ENCODE measurements at regions of chr19 and their contacts with region 1.

Region 1: GRCh38 chr19:58154679-58155648 is 4.4 kb upstream of the ZNF329 start:
- DNase-seq: peak; percentile 93
- H3K4me3 ChIP-seq: peak overlapping the region; percentile 39 to 75 (median 63)
- H3K27ac ChIP-seq: no peak overlapping the region
- H3K4me1 ChIP-seq: no peaks in the 10 kb centered on the region
- H3K27me3 ChIP-seq: no peaks in the 10 kb centered on the region
- CTCF ChIP-seq: peak; percentile 96 to 99
- POLR2A ChIP-seq: peak; percentile 74

Region 2: GRCh38 chr19:56393119-56394012 is 1761.6 kb before region 1 on chr19 and contains the start of gene ZNF582:
- CTCF ChIA-PET with region 1: no interaction called
- POLR2A ChIA-PET with region 1: no interaction called
- dilution Hi-C with region 1: no loop called
- intact Hi-C with region 1: loop called (anchors 1 kb)
- DNase-seq: peak; percentile 94
- H3K4me3 ChIP-seq: peak within 1 kb of the TSS in 2 of 3 experiments; percentile 17 to 64
- H3K27ac ChIP-seq: peak within 1 kb of the TSS; percentile 26
- H3K4me1 ChIP-seq: no peaks in the 10 kb centered on the region
- H3K27me3 ChIP-seq: no peaks in the 10 kb centered on the region
- CTCF ChIP-seq: peak; percentile 75 to 87
- POLR2A ChIP-seq: peak; percentile 70
- total RNA-seq, gene ZNF582: 2.2 and 2.9 TPM in 2 replicates

Region 3: DNA sequence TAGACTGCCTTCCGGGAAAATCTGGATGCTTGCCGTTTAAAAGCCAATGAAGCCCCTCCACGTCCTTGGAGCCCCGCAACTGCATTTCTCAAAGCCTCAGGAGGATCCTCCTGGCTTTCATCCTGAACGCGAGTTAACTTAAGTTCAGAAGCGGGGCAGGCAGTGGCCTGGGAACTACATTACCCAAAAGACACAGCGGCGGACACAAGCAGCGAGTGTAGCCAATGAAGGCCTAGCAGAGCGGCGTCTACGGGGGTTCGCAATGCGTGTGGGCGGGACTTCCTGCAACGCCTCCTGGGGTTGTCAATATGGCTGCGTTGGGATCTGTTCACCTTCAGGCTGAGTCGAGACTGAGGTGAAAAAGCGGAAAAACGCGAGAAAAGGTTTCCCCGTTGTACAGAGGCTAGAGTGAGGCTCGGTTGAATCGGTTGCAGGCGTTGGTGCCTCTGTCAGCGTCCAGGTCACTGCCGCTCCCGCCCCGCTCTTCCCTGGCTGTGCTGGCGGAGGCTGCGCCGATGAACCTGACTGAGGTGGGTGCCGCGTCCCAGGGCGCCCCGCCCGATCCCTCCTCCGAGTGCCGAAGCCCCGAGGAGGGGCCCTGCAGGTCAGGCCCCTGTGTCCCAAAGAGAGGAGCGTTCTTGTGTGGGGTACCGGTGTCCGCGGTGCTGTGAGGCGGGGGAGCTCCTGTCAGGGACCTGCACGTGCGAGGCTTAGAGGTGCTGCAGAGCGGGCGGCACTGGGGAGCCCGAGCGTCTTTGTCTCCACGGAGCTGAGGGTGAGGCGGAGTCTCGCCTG is 743.9 kb before region 1 on chr19 and contains the start of gene ZNF17:
- CTCF ChIA-PET with region 1: no interaction called
- POLR2A ChIA-PET with region 1: no interaction called
- dilution Hi-C with region 1: no loop called
- intact Hi-C with region 1: loop called (anchors 1 kb)
- DNase-seq: peak; percentile 95
- H3K4me3 ChIP-seq: peak within 1 kb of the TSS; percentile 91 to 99 (median 97)
- H3K27ac ChIP-seq: no peak within 1 kb of the TSS
- H3K4me1 ChIP-seq: peaks cover 8% of the 10 kb centered on the region
- H3K27me3 ChIP-seq: no peaks in the 10 kb centered on the region
- CTCF ChIP-seq: no peak
- POLR2A ChIP-seq: no peak
- total RNA-seq, gene ZNF17: 4.7 and 6.4 TPM in 2 replicates

Region 4: DNA sequence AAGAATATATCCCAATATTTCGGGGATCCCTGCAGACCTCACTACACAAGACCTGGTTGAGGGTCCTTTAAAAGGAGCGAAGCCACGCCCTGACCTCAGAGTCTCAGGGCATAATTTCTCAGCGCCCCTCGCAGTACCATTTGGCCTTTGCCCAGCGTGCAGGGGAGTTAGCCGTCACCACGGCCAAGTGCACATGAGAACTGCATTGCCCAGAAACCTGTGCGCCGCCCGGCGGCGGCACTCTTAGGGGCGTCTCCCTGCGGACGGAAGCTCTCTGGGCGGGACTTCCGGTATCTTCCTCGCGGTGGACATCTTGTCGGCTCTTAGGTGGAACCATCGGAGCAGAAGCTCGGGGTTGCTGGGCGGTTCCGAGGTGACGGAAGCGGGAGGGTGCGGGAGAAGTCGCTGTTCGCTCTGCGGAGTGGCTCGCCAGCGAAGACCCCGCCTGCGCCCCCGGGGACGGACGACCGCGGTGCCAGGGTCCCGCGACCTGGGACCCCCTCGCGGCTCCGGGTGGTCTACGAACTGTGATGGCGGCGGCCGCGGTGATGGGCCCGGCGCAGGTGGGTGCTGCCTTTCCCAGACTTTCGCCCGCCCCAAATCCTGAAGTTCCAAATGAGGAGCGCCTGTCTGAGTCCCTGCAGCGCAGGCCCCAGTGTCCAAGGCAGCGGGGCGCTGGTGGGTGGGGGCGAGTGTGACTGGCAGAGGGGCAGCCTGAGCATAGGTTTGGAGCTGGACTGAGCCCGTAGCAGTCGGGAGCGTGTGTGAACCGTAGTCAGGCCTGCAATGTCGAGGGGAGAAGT is 540.8 kb before region 1 on chr19 and contains the start of gene ZNF134:
- CTCF ChIA-PET with region 1: no interaction called
- POLR2A ChIA-PET with region 1: no interaction called
- dilution Hi-C with region 1: no loop called
- intact Hi-C with region 1: loop called (anchors 10 kb)
- DNase-seq: peak; percentile 84
- H3K4me3 ChIP-seq: peak within 1 kb of the TSS; percentile 53 to 77 (median 65)
- H3K27ac ChIP-seq: no peak within 1 kb of the TSS
- H3K4me1 ChIP-seq: no peaks in the 10 kb centered on the region
- H3K27me3 ChIP-seq: no peaks in the 10 kb centered on the region
- CTCF ChIP-seq: peak in 1 of 2 donors; percentile 62
- POLR2A ChIP-seq: peak; percentile 49
- total RNA-seq, gene ZNF134: 11.1 and 12.3 TPM in 2 replicates

Region 5: GRCh38 chr19:58002384-58003173 is 152.4 kb before region 1 on chr19 and contains the start of gene ZNF606:
- CTCF ChIA-PET with region 1: no interaction called
- POLR2A ChIA-PET with region 1: interaction called, 3 read pairs
- dilution Hi-C with region 1: no loop called
- intact Hi-C with region 1: loop called (anchors 10 kb)
- DNase-seq: peak; percentile 89
- H3K4me3 ChIP-seq: peak within 1 kb of the TSS; percentile 39 to 90 (median 75)
- H3K27ac ChIP-seq: peak within 1 kb of the TSS; percentile 24
- H3K4me1 ChIP-seq: peaks cover 5% of the 10 kb centered on the region
- H3K27me3 ChIP-seq: no peaks in the 10 kb centered on the region
- CTCF ChIP-seq: no peak
- POLR2A ChIP-seq: peak; percentile 67
- total RNA-seq, gene ZNF606: 7.8 and 10.8 TPM in 2 replicates

Region 6: GRCh38 chr19:58097781-58098681 is 56.9 kb before region 1 on chr19 and contains the start of gene ZSCAN18:
- CTCF ChIA-PET with region 1: no interaction called
- POLR2A ChIA-PET with region 1: no interaction called
- dilution Hi-C with region 1: no loop called
- intact Hi-C with region 1: loop called (anchors 10 kb)
- DNase-seq: peak; percentile 93
- H3K4me3 ChIP-seq: peak within 1 kb of the TSS; percentile 38 to 72 (median 43)
- H3K27ac ChIP-seq: peak within 1 kb of the TSS; percentile 70
- H3K4me1 ChIP-seq: no peaks in the 10 kb centered on the region
- H3K27me3 ChIP-seq: no peaks in the 10 kb centered on the region
- CTCF ChIP-seq: no peak
- POLR2A ChIP-seq: no peak
- total RNA-seq, gene ZSCAN18: 9.4 and 15.8 TPM in 2 replicates

Region 7: GRCh38 chr19:58181902-58182576 is 27.1 kb after region 1 on chr19:
- CTCF ChIA-PET with region 1: no interaction called
- POLR2A ChIA-PET with region 1: no interaction called
- dilution Hi-C with region 1: no loop called
- intact Hi-C with region 1: no loop called
- DNase-seq: peak; percentile 30
- H3K4me3 ChIP-seq: peak overlapping the region in 1 of 3 experiments; percentile 98
- H3K27ac ChIP-seq: no peak overlapping the region
- H3K4me1 ChIP-seq: no peaks in the 10 kb centered on the region
- H3K27me3 ChIP-seq: no peaks in the 10 kb centered on the region
- CTCF ChIP-seq: peak; percentile 41 to 48
- POLR2A ChIP-seq: no peak

Measured in endothelial cell of umbilical vein (primary cell).